ENCODE measurements at regions of chr7 and their contacts with region 1.

Region 1: GRCh38 chr7:139777948-139778841 is at the start of gene HIPK2:
- DNase-seq: peak; percentile 64
- H3K4me3 Mint-ChIP-seq: peak within 1 kb of the TSS; percentile 95
- H3K27ac Mint-ChIP-seq: peak within 1 kb of the TSS; percentile 88
- H3K4me1 Mint-ChIP-seq: peaks cover 29% of the 10 kb centered on the region
- H3K27me3 Mint-ChIP-seq: peaks cover 19% of the 10 kb centered on the region
- CTCF ChIP-seq: no peak
- total RNA-seq, gene HIPK2: 30.9 and 33.4 TPM in 2 replicates

Region 2: DNA sequence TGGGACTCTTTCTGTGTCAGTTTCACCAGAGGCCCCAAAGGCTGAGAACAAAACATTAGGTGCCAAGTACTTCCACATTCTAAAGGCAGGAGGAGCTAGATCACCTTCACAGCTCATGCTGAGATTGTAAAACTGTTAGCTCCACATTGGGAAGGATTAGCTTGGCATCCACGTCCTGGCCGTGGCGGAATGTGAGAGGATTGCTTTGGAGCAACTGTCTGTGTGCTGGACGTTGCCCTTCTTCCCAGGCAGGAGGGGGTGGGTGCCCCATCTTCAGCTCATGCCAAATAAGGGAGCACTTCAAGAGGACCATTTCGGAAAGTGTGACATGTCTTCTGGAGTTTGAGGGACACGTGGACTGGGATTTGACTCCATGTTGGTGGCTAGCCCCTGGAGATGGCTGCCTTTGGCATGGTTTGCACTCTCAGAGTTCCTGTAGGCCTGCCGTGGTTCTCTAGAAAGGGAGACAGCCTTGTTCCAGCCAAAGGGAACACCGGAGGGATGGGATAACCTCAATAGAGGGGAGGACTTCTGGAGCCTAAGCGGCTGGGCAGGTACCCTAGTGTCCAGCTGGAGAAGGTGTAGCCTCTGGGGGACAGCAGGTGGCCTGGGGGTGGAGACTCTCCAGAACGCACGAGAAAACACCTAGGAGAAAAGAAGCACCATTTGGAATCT is 457.0 kb before region 1 on chr7:
- CTCF ChIA-PET with region 1: no interaction called
- intact Hi-C with region 1: no loop called
- DNase-seq: no peak
- H3K4me3 Mint-ChIP-seq: no peak overlapping the region
- H3K27ac Mint-ChIP-seq: no peak overlapping the region
- H3K4me1 Mint-ChIP-seq: no peaks in the 10 kb centered on the region
- H3K27me3 Mint-ChIP-seq: no peaks in the 10 kb centered on the region
- CTCF ChIP-seq: no peak

Region 3: GRCh38 chr7:139645572-139646523 is 132.3 kb before region 1 on chr7:
- CTCF ChIA-PET with region 1: no interaction called
- intact Hi-C with region 1: loop called (anchors 2 kb)
- DNase-seq: peak; percentile 89
- H3K4me3 Mint-ChIP-seq: no peak overlapping the region
- H3K27ac Mint-ChIP-seq: no peak overlapping the region
- H3K4me1 Mint-ChIP-seq: peaks cover 8% of the 10 kb centered on the region
- H3K27me3 Mint-ChIP-seq: no peaks in the 10 kb centered on the region
- CTCF ChIP-seq: peak; percentile 85

Region 4: GRCh38 chr7:139660317-139661042 is 117.7 kb before region 1 on chr7:
- CTCF ChIA-PET with region 1: no interaction called
- intact Hi-C with region 1: loop called (anchors 5 kb)
- DNase-seq: no peak
- H3K4me3 Mint-ChIP-seq: no peak overlapping the region
- H3K27ac Mint-ChIP-seq: no peak overlapping the region
- H3K4me1 Mint-ChIP-seq: peaks cover 59% of the 10 kb centered on the region
- H3K27me3 Mint-ChIP-seq: no peaks in the 10 kb centered on the region
- CTCF ChIP-seq: no peak

Region 5: GRCh38 chr7:139731802-139732470 is 46.3 kb before region 1 on chr7:
- CTCF ChIA-PET with region 1: interaction called, 5 read pairs
- intact Hi-C with region 1: loop called (anchors 2 kb)
- DNase-seq: peak; percentile 87
- H3K4me3 Mint-ChIP-seq: peak overlapping the region; percentile 53
- H3K27ac Mint-ChIP-seq: peak overlapping the region; percentile 47
- H3K4me1 Mint-ChIP-seq: peaks cover 42% of the 10 kb centered on the region
- H3K27me3 Mint-ChIP-seq: no peaks in the 10 kb centered on the region
- CTCF ChIP-seq: no peak

Region 6: DNA sequence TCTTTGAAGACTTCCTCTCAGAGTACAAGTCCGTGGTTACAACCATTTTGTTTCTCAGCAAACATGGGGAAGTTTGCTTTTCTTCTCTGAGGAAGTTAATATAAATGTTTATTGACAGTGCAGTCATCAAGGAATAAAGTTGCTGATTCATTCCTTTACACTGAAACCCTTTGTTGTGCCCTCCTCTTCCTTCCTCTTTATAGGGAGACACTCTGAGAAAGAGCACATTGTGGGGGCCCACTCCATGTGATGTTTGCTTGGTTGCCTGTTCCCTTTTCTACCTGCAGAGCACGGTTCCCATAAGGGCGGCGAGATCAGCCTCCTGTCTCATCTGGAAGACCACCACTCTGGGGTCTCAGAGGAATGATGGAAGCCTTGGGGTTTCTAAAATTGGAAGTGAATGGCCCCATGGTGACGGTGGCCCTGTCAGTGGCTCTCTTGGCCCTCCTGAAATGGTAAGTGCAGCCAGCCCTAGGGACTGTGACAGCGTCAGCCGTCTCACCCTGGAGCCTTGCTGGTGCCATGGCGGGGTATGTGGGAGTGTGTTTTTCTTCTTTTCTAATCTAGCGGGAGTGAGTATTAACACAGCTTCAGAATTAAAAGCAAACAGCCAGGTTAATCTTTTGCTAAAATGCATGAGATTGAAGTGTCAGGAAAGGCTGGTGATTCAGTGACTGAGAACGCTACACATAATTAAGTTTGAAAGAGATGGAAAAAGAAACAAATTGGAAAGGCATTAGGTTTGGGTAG is 51.0 kb after region 1 on chr7 and contains the start of gene TBXAS1:
- CTCF ChIA-PET with region 1: no interaction called
- intact Hi-C with region 1: loop called (anchors 2 kb)
- DNase-seq: peak; percentile 64
- H3K4me3 Mint-ChIP-seq: peak within 1 kb of the TSS; percentile 73
- H3K27ac Mint-ChIP-seq: peak within 1 kb of the TSS; percentile 99
- H3K4me1 Mint-ChIP-seq: peaks cover 52% of the 10 kb centered on the region
- H3K27me3 Mint-ChIP-seq: no peaks in the 10 kb centered on the region
- CTCF ChIP-seq: no peak
- total RNA-seq, gene TBXAS1: 31.2 and 33.0 TPM in 2 replicates

Region 7: GRCh38 chr7:139842401-139843210 is 64.4 kb after region 1 on chr7:
- CTCF ChIA-PET with region 1: no interaction called
- intact Hi-C with region 1: no loop called
- DNase-seq: no peak
- H3K4me3 Mint-ChIP-seq: no peak overlapping the region
- H3K27ac Mint-ChIP-seq: no peak overlapping the region
- H3K4me1 Mint-ChIP-seq: peaks cover 22% of the 10 kb centered on the region
- H3K27me3 Mint-ChIP-seq: no peaks in the 10 kb centered on the region
- CTCF ChIP-seq: no peak

Region 8: GRCh38 chr7:139915864-139916716 is 137.9 kb after region 1 on chr7:
- CTCF ChIA-PET with region 1: no interaction called
- intact Hi-C with region 1: loop called (anchors 2 kb)
- DNase-seq: peak; percentile 67
- H3K4me3 Mint-ChIP-seq: no peak overlapping the region
- H3K27ac Mint-ChIP-seq: peak overlapping the region; percentile 44
- H3K4me1 Mint-ChIP-seq: peaks cover 23% of the 10 kb centered on the region
- H3K27me3 Mint-ChIP-seq: no peaks in the 10 kb centered on the region
- CTCF ChIP-seq: no peak

Region 9: DNA sequence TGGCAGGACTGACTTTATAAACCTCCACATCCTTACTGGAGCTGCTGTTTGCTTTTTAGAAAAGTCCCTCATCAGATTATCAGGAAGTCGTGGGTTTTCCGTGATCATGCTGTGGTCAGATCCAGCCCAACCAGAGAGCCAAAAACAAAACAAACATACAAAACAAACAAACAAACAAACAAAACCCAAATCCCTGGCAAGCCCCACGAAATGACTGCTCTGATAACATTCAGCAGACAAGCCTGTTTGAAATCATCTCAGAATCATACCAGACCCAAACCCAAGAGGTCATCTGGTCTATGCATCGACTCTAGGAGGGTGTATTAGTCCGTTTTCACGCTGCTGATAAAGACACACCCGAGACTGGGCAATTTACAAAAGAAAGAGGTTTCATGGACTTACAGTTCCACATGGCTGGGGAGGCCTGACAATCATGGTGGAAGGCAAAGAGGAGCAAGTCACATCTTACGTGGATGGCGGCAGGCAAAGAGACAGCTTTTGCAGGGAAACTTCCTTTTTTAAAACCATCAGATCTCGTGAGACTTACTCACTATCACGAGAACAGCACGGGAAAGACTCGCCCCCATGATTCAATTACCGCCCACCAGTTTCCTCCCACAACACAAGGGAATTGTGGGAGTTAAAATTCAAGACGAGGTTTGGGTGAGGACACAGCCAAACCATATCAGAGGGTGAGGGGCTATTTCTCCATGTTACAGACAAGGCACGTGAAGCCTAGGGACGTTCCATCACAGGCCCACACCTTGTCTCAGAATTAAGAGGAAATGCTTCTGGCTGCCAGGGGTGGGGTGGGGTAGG is 198.9 kb after region 1 on chr7:
- CTCF ChIA-PET with region 1: no interaction called
- intact Hi-C with region 1: no loop called
- DNase-seq: no peak
- H3K4me3 Mint-ChIP-seq: no peak overlapping the region
- H3K27ac Mint-ChIP-seq: no peak overlapping the region
- H3K4me1 Mint-ChIP-seq: no peaks in the 10 kb centered on the region
- H3K27me3 Mint-ChIP-seq: no peaks in the 10 kb centered on the region
- CTCF ChIP-seq: no peak

Region 10: DNA sequence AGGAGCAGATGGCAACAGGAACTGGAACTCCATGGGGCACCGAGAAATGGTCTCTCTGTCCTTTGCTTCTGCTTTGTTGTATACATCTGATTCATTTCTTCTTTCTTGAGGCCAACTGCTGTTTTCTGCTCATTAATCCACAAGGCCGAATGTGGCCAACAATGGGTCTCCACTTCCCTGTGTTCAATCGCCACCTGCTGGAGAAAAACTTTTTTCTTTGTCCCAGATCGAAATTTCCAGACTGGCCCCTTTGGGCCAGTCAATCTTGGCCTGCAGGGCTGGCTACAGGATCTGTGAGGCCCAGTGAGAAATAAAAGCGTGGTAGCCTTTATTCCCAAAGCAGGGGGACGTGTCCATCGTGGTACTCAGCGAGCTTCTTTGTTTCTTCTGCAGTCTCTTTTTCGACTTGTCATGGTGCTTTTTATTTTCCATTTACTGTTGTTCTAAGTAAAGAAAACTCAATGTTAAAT is 225.8 kb after region 1 on chr7:
- CTCF ChIA-PET with region 1: no interaction called
- intact Hi-C with region 1: loop called (anchors 1 kb)
- DNase-seq: peak; percentile 63
- H3K4me3 Mint-ChIP-seq: no peak overlapping the region
- H3K27ac Mint-ChIP-seq: no peak overlapping the region
- H3K4me1 Mint-ChIP-seq: no peaks in the 10 kb centered on the region
- H3K27me3 Mint-ChIP-seq: no peaks in the 10 kb centered on the region
- CTCF ChIP-seq: peak; percentile 68